ENCODE measurements at regions of chr10 and their contacts with region 1.

Region 1: DNA sequence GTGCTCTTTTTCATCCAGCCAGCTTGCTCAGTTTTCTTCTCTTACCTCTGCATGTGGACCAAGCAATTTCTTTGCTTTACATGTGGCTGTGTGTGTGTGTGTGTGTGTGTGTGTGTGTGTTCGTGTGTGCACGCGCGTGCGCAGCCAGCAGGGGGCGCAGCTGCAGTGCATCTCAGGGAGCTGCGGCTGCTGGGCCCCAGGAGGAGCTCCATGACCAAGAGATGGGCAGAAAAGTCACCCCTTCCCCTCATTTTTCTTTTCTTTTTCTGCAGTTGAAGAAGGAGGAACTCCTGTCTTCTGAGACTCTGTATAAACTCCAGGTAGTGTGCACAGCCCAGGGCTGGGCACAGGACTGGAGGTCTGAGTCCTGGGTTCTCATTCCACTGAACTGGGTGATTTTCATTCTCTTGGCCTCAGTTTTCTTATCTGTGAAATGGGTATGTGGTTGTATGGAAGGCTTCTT is 41.8 kb downstream of the BLNK start:
- DNase-seq: peak; percentile 82
- ATAC-seq: peak; percentile 87
- H3K4me3 Mint-ChIP-seq: no peak overlapping the region
- H3K27ac Mint-ChIP-seq: no peak overlapping the region
- H3K4me1 Mint-ChIP-seq: no peaks in the 10 kb centered on the region
- H3K27me3 Mint-ChIP-seq: no peaks in the 10 kb centered on the region
- CTCF ChIP-seq: peak; percentile 75

Region 2: DNA sequence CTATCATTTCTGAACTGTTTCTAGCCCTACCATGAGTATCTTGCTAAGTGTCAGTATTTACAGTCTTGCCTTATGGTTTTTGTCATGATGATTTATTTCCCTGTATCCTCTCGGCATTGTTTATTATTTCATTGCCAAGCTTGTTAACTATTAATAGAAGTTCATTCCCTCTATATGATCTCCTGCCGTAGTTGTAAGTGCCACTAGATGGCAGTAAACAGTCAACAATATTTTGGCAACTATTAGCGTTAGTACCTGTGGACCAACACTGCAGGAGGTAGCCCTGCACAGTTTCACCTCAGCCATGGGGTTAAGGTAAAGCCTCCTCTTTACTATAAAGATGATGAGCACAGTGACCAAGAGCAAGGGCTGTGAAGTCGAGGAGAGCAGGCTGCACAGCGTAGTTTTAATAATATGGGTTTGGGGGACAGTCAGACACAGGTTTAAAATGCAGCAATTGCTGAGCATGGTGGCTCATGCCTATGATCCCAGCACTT is 212.4 kb before region 1 on chr10:
- CTCF ChIA-PET with region 1: interaction called, 20 read pairs
- POLR2A ChIA-PET with region 1: no interaction called
- intact Hi-C with region 1: loop called (anchors 5 kb)
- DNase-seq: peak; percentile 45
- ATAC-seq: peak; percentile 92
- H3K4me3 Mint-ChIP-seq: no peak overlapping the region
- H3K27ac Mint-ChIP-seq: no peak overlapping the region
- H3K4me1 Mint-ChIP-seq: no peaks in the 10 kb centered on the region
- H3K27me3 Mint-ChIP-seq: no peaks in the 10 kb centered on the region
- CTCF ChIP-seq: peak; percentile 77

Region 3: GRCh38 chr10:96267234-96267705 is 37.7 kb after region 1 on chr10:
- CTCF ChIA-PET with region 1: interaction called, 12 read pairs
- POLR2A ChIA-PET with region 1: no interaction called
- intact Hi-C with region 1: no loop called
- DNase-seq: no peak
- ATAC-seq: peak; percentile 34
- H3K4me3 Mint-ChIP-seq: no peak overlapping the region
- H3K27ac Mint-ChIP-seq: no peak overlapping the region
- H3K4me1 Mint-ChIP-seq: no peaks in the 10 kb centered on the region
- H3K27me3 Mint-ChIP-seq: peaks cover 2% of the 10 kb centered on the region
- CTCF ChIP-seq: no peak

Region 4: GRCh38 chr10:96292971-96293920 is 63.6 kb after region 1 on chr10:
- CTCF ChIA-PET with region 1: interaction called, 102 read pairs
- POLR2A ChIA-PET with region 1: interaction called, 3 read pairs
- intact Hi-C with region 1: no loop called
- DNase-seq: no peak
- ATAC-seq: peak; percentile 76
- H3K4me3 Mint-ChIP-seq: no peak overlapping the region
- H3K27ac Mint-ChIP-seq: no peak overlapping the region
- H3K4me1 Mint-ChIP-seq: peaks cover 21% of the 10 kb centered on the region
- H3K27me3 Mint-ChIP-seq: peaks cover 5% of the 10 kb centered on the region
- CTCF ChIP-seq: peak; percentile 48

Region 5: GRCh38 chr10:96306516-96306915 is 76.9 kb after region 1 on chr10:
- CTCF ChIA-PET with region 1: interaction called, 11 read pairs
- POLR2A ChIA-PET with region 1: no interaction called
- intact Hi-C with region 1: no loop called
- DNase-seq: peak; percentile 19
- ATAC-seq: peak; percentile 24
- H3K4me3 Mint-ChIP-seq: no peak overlapping the region
- H3K27ac Mint-ChIP-seq: no peak overlapping the region
- H3K4me1 Mint-ChIP-seq: peaks cover 22% of the 10 kb centered on the region
- H3K27me3 Mint-ChIP-seq: peaks cover 6% of the 10 kb centered on the region
- CTCF ChIP-seq: no peak

Region 6: DNA sequence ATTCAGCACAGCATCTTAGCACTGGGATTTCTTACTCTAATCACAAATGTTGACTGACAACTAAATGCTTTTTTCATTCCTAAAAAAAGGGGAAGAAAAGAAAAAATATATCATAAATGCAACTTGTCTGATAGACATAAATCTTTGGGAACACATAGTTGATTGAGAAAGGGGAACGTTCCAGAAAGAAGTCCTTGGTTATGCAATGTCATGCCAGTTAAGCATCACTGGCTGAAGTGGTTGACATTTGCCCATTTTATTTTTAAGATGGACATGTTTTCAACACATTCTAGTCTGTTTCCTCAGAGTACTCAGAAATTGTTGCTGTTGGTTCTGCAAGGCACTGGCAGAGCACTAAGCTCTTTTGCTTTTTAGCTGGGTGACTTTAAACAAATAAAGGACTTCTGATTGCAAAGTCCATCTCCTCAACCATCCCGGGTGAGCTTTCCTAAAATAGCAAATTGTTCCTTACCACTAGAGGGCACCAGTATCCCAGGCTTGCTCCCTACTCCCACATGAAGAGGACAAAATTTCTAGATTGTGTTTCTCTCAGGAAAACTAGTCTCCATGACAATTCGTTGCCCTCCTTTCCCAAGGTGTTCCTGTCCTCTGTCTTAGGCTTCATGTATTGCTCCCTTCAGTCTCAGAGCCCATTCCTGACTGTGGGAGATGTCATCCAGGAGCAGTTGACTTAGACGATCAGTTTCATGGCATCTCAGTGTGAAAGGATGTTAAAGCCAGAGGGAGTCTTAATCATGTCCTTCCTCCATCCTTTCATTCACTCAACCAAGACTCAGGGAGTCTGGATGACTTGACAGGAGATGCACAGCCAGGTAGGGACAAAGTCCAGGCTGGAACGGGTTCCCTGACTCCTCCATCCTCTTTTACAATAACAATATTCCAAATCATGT is 105.3 kb after region 1 on chr10:
- CTCF ChIA-PET with region 1: interaction called, 84 read pairs
- POLR2A ChIA-PET with region 1: interaction called, 3 read pairs
- intact Hi-C with region 1: loop called (anchors 5 kb)
- DNase-seq: no peak
- ATAC-seq: no peak
- H3K4me3 Mint-ChIP-seq: no peak overlapping the region
- H3K27ac Mint-ChIP-seq: no peak overlapping the region
- H3K4me1 Mint-ChIP-seq: peaks cover 16% of the 10 kb centered on the region
- H3K27me3 Mint-ChIP-seq: peaks cover 5% of the 10 kb centered on the region
- CTCF ChIP-seq: peak; percentile 64